Endothelial cell of umbilical vein (primary cell): ENCODE measurements at regions of chr10 and their contacts with region 1.

Region 1: DNA sequence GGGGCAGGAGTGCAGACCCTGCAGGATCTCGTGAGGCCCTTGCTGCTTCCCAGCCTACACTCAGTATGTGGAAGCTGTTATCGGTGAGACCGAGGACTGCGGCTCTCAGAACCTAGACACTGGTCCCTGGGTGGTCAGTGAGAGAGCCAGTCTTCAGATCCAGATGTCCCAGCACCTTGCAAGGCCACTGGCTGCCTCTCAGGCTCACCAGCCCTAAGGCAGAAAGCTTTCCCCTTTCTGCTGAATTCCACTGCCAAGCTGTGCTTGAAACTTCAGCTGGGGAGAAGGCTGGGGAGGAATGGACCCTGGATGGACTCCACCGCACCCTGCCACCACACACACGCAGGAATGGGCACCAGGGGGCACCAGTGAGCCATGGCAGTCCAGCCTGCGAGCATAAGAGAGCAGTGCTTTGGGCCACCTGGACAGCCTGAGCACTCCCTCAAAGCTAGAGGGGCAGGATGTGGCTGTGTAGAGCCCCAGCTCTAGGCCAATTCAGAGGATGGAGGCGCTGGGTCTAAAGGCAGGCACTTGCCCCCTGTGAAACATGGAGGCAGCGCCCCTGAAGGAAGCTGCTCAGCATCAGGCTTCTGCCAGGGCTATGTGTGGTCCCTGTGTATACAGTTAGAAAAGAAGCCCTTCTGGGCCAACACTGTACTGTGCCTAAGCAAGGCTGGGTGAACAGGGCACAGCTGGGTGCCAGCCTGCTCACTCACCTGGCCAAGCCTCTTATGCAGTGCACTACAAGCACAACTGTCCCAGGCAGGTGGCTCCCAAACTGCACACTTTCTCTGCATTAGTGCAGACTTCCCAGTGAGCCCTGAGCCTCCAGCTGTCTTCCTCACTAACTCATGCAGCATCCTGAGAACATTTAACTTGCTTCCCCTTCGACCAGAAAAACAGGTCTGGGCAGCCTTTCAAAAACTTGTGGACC is 21.6 kb downstream of the TMEM72 start:
- DNase-seq: peak; percentile 76
- H3K4me3 ChIP-seq: no peak overlapping the region
- H3K27ac ChIP-seq: no peak overlapping the region
- H3K4me1 ChIP-seq: no peaks in the 10 kb centered on the region
- H3K27me3 ChIP-seq: no peaks in the 10 kb centered on the region
- CTCF ChIP-seq: peak; percentile 88 to 98
- POLR2A ChIP-seq: no peak

Region 2: DNA sequence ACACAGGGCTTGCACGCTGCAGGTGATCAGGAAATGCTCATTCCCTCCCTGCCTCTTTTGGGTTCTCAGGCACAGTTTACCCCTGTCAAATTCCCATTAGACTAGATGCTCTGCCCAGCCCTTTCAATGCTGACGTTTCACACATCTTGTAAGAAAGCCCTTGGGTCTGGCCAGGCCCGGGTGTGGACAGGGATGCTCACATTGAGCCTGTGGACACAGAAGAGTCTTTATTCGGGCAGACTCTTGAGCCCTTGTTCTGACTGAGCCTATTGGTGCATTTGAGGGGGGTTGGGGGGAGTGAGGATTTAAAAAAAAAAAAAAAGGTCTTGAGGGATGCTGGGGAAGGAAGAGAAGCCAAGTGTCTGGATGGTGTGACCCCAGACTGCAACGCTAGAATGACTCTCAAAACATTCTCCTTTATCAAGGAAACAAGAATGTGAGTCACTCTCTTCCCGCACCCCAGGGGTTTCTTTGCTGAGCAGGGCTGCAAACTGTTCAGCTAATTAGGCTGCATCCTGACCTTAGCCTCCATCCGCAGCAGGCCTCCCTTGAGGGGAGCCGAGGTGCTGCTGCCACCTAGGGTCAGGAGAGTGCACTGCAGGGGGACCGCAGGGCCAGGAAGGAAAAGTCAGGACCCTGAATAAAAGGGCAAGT is 75.3 kb before region 1 on chr10:
- CTCF ChIA-PET with region 1: no interaction called
- POLR2A ChIA-PET with region 1: no interaction called
- dilution Hi-C with region 1: no loop called
- intact Hi-C with region 1: no loop called
- DNase-seq: peak; percentile 40
- H3K4me3 ChIP-seq: no peak overlapping the region
- H3K27ac ChIP-seq: no peak overlapping the region
- H3K4me1 ChIP-seq: no peaks in the 10 kb centered on the region
- H3K27me3 ChIP-seq: no peaks in the 10 kb centered on the region
- CTCF ChIP-seq: peak; percentile 94 to 97
- POLR2A ChIP-seq: no peak

Region 3: GRCh38 chr10:44947371-44948152 is 14.8 kb after region 1 on chr10:
- CTCF ChIA-PET with region 1: interaction called, 10 read pairs
- POLR2A ChIA-PET with region 1: no interaction called
- dilution Hi-C with region 1: no loop called
- intact Hi-C with region 1: no loop called
- DNase-seq: no peak
- H3K4me3 ChIP-seq: no peak overlapping the region
- H3K27ac ChIP-seq: no peak overlapping the region
- H3K4me1 ChIP-seq: no peaks in the 10 kb centered on the region
- H3K27me3 ChIP-seq: peaks cover 5 to 7% of the 10 kb centered on the region in 2 experiments
- CTCF ChIP-seq: no peak
- POLR2A ChIP-seq: no peak

Region 4: GRCh38 chr10:44959247-44960087 is 26.7 kb after region 1 on chr10 and contains the start of gene RASSF4:
- CTCF ChIA-PET with region 1: interaction called, 10 read pairs
- POLR2A ChIA-PET with region 1: no interaction called
- dilution Hi-C with region 1: no loop called
- intact Hi-C with region 1: no loop called
- DNase-seq: peak; percentile 90
- H3K4me3 ChIP-seq: peak within 1 kb of the TSS; percentile 40 to 85 (median 74)
- H3K27ac ChIP-seq: peak within 1 kb of the TSS; percentile 57
- H3K4me1 ChIP-seq: peaks cover 11% of the 10 kb centered on the region
- H3K27me3 ChIP-seq: no peaks in the 10 kb centered on the region
- CTCF ChIP-seq: no peak
- POLR2A ChIP-seq: peak; percentile 82
- total RNA-seq, gene RASSF4: 4.6 and 7.6 TPM in 2 replicates

Region 5: DNA sequence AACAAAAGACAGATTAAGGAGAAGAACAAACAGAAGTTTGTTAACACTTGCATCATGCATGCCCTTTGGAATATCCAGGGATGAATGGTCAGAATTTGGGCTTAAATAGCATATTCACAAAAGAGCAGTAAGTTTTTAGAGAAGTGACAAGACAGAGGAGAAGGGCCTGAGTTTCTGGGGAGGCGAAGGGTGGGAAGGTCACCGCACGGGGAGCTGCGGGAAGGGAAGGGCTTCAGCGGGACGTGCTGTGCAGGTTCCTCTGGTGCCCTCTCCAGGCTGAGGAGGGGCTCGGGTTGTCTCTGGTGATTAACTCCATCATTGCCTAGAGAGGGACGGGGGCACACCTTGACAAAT is 57.5 kb after region 1 on chr10:
- CTCF ChIA-PET with region 1: interaction called, 30 read pairs
- POLR2A ChIA-PET with region 1: no interaction called
- dilution Hi-C with region 1: no loop called
- intact Hi-C with region 1: no loop called
- DNase-seq: no peak
- H3K4me3 ChIP-seq: no peak overlapping the region
- H3K27ac ChIP-seq: no peak overlapping the region
- H3K4me1 ChIP-seq: peaks cover 9% of the 10 kb centered on the region
- H3K27me3 ChIP-seq: no peaks in the 10 kb centered on the region
- CTCF ChIP-seq: peak in 1 of 2 donors; percentile 38
- POLR2A ChIP-seq: no peak

Region 6: GRCh38 chr10:45000752-45001380 is 68.1 kb after region 1 on chr10 and contains the start of gene ZNF22:
- CTCF ChIA-PET with region 1: interaction called, 62 read pairs
- POLR2A ChIA-PET with region 1: no interaction called
- dilution Hi-C with region 1: no loop called
- intact Hi-C with region 1: loop called (anchors 1 kb)
- DNase-seq: peak; percentile 75
- H3K4me3 ChIP-seq: peak within 1 kb of the TSS; percentile 34 to 86 (median 48)
- H3K27ac ChIP-seq: peak within 1 kb of the TSS; percentile 89
- H3K4me1 ChIP-seq: peaks cover 27% of the 10 kb centered on the region
- H3K27me3 ChIP-seq: no peaks in the 10 kb centered on the region
- CTCF ChIP-seq: peak in 1 of 2 donors; percentile 19
- POLR2A ChIP-seq: peak; percentile 80
- total RNA-seq, gene ZNF22: 45.0 and 48.7 TPM in 2 replicates